ENCODE measurements at regions of chr16 and their contacts with region 1.

Region 1: DNA sequence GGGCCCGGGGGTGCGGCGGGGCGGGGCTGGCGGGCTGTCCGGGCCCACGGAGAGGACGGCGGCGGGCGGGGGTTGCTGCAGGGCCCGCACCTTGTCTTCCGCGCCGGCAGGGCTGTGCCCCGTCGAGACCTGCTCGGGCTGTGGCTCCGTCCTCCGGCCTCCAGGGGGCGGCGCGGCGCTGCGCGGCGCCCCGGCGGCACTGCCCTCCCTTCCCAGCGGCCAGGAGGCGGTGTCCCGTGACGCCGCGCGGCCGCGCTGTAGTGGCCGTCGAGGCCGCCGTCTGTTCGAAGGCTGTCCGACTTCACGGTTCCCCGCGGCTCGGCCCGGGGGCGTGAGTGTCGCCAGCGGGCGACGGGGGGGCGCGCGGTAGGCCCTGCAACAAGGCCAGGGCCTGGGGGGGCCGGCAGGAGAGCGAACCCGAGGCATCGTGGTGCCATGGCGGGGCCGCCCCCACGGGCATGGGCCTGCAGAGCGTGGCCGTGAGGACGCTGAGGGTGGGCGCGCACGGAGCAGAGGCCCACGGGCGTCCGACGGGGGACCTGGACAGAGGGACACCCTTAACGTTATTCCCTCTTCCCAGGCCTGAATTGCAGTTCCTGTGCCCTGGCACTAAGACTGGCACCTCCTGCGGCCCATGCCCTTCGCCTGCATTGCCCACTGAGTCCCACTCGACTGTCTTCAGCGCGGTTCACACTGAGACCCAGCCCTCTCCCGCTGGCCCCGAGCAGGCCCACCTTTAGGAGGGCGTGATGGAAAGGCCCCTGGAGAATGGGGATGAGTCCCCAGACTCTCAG is at the start of gene PLEKHG4:
- DNase-seq: peak; percentile 35
- H3K4me3 ChIP-seq: peak within 1 kb of the TSS in 2 of 3 experiments; percentile 19 to 26
- H3K27ac ChIP-seq: no peak within 1 kb of the TSS
- H3K4me1 ChIP-seq: peaks cover 29% of the 10 kb centered on the region
- H3K27me3 ChIP-seq: no peaks in the 10 kb centered on the region
- CTCF ChIP-seq: peak; percentile 38 to 57
- total RNA-seq, gene PLEKHG4: 1.2 to 1.7 TPM

Region 2: GRCh38 chr16:67236563-67237395 is 42.7 kb before region 1 on chr16:
- CTCF ChIA-PET with region 1: no interaction called
- dilution Hi-C with region 1: loop called (anchors 5 kb)
- in situ Hi-C with region 1: no loop called
- intact Hi-C with region 1: no loop called
- DNase-seq: peak; percentile 71
- H3K4me3 ChIP-seq: no peak overlapping the region
- H3K27ac ChIP-seq: no peak overlapping the region
- H3K4me1 ChIP-seq: peaks cover 28% of the 10 kb centered on the region
- H3K27me3 ChIP-seq: no peaks in the 10 kb centered on the region
- CTCF ChIP-seq: no peak

Region 3: DNA sequence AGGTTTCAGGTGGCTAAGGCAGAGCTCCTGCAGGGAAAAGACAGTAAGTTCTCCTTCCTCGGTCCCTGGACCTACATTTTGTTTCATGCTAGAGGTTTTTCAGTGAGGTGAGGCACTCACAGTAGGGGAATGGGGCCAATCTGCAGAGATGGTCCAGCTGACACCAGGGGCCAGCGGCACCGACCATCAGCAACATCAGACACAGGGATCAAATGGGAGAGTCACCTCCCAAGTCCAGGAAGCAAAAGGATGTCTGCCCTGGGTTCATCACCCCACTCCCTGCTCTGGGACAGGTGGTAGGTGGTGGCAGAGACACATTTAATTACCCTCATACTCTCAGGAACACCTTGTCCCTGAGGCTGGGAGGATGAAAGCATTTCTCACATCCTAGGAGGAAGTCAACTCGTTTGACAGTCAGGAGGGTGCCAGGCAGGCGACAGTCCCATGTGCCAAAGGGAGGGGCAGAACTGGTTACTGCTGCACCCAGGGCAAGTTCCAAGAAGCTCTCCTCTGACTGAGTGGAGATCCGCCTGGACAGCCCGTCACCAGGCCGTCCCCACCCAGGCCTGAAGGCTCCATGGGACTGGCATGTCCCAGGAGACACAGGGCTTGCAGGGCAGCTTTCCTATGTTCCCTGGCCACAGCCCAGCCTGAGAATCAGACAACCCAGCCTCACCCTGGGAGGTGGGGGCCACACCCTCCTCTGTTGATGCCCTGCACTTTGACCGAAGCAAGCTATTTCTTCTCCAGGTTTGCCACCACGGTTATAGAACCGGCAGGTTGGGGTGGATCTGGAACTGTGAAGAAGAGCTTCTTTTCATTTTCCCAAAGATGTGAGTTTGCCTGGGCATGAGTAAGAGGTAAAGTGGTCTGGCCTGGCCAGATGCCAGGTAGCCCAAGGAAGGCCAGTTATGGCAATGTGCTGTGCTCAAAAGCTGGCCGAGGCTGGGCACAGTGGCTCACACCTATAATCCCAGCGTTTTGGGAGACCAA is 182.4 kb after region 1 on chr16:
- CTCF ChIA-PET with region 1: no interaction called
- dilution Hi-C with region 1: no loop called
- in situ Hi-C with region 1: loop called in 1 of 2 experiments (anchors 10 kb)
- intact Hi-C with region 1: no loop called
- DNase-seq: no peak
- H3K4me3 ChIP-seq: no peak overlapping the region
- H3K27ac ChIP-seq: no peak overlapping the region
- H3K4me1 ChIP-seq: peaks cover 38% of the 10 kb centered on the region
- H3K27me3 ChIP-seq: no peaks in the 10 kb centered on the region
- CTCF ChIP-seq: no peak

Measured in mammary epithelial cell (primary cell).